ENCODE measurements at regions of chr7 and their contacts with region 1.

Region 1: GRCh38 chr7:83947260-83947659 is 247.3 kb downstream of the SEMA3A start:
- DNase-seq: peak in 1 of 2 experiments; percentile 31
- H3K4me3 ChIP-seq: no peak overlapping the region
- H3K27ac ChIP-seq: no peak overlapping the region
- H3K4me1 ChIP-seq: no peaks in the 10 kb centered on the region
- H3K27me3 ChIP-seq: no peaks in the 10 kb centered on the region
- CTCF ChIP-seq: peak; percentile 54 to 86 (median 82)
- EP300 ChIP-seq: no peak
- POLR2A ChIP-seq: no peak
- RAD21 ChIP-seq: peak; percentile 61 to 74

Region 2: DNA sequence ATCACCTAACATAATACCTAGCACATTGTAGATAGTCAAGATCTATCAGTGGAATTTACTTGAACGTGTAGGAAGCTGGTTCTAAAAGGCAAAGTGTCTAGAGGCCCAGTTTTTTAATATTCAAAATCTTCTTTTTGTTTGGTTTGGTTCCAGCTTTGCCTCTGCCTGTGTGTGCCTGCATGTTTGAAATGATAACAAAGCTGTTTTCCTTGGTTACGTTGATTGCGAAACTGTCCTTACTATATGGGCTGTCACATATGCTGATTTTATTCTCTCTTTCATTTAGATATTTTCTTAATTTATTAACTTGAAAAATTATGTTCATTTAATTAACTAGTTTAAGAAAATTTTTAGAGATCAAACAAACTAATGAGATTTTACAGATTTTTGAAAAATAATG is 10.1 kb after region 1 on chr7:
- CTCF ChIA-PET with region 1: interaction called, 17 read pairs
- POLR2A ChIA-PET with region 1: interaction called, 3 read pairs
- DNase-seq: no peak
- H3K4me3 ChIP-seq: no peak overlapping the region
- H3K27ac ChIP-seq: no peak overlapping the region
- H3K4me1 ChIP-seq: no peaks in the 10 kb centered on the region
- H3K27me3 ChIP-seq: no peaks in the 10 kb centered on the region
- CTCF ChIP-seq: no peak
- EP300 ChIP-seq: no peak
- POLR2A ChIP-seq: no peak
- RAD21 ChIP-seq: no peak

Region 3: GRCh38 chr7:85023045-85023712 is 1075.9 kb after region 1 on chr7:
- CTCF ChIA-PET with region 1: interaction called, 10 read pairs
- POLR2A ChIA-PET with region 1: no interaction called
- DNase-seq: no peak
- H3K4me3 ChIP-seq: no peak overlapping the region
- H3K27ac ChIP-seq: no peak overlapping the region
- H3K4me1 ChIP-seq: peaks cover 0 to 10% (median 0%) of the 10 kb centered on the region in 4 experiments; a peak in 1 of 7 replicates
- H3K27me3 ChIP-seq: no peaks in the 10 kb centered on the region
- CTCF ChIP-seq: peak in 2 of 3 experiments; percentile 46 to 49; a peak in 2 of 4 replicates
- EP300 ChIP-seq: no peak
- POLR2A ChIP-seq: no peak
- RAD21 ChIP-seq: peak; percentile 79 to 84